Right ventricle myocardium inferior (tissue), 1 donor: ENCODE measurements at regions of chr15 and their contacts with region 1.

Region 1: GRCh38 chr15:31365655-31366127 is 39.1 kb downstream of the KLF13 start:
- DNase-seq: peak; percentile 98
- ATAC-seq: peak; percentile 90

Region 2: DNA sequence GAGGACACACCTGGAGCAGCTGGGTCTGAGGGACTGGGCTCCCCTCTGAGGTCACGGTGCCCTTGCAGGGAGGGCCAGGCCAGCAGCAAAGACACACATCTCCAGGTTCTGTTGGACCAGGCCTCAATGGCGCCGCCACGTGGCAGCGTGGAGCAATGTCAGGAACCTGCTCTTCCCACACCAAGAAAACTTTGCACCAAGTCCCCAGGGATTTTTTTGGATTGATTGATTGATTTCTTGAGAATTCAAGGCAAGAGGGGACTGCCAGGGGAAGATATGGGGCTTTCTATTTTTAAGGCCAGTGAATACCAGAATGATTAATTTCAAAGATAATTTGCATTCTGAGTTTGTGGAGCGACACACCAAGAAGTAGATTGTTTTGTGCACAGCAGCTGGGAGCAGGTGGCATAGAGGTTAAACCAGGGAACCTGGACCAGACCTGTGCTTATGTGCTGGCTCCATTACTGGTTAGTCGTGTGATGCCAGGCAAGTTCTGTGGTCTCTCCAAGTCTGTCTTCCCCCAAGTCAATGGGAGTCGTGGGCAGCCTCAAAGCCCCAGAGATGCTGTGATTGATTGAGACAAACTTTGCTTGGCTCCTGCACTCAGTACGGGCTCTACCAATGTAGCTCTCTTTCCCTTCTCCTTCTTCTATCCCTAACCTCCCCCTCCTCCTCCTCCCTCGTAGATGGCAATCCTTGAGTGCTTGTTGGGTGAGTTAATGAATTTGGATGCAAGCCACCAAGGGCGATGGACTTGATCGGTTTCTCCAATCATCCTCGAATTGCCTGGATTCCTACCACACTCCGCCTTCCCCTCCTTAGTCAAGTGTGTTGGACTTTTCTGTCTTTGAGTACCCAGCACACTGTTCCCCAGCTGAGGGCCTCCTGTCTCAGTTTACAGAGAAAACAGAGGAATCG is 167.9 kb before region 1 on chr15:
- intact Hi-C with region 1: no loop called
- DNase-seq: peak; percentile 81
- ATAC-seq: no peak

Region 3: GRCh38 chr15:31338879-31339557 is 26.7 kb before region 1 on chr15:
- intact Hi-C with region 1: no loop called
- DNase-seq: peak; percentile 88
- ATAC-seq: peak; percentile 65

Region 4: GRCh38 chr15:31352911-31353811 is 12.5 kb before region 1 on chr15:
- intact Hi-C with region 1: loop called (anchors 1 kb)
- DNase-seq: peak; percentile 81
- ATAC-seq: peak; percentile 82

Region 5: GRCh38 chr15:31387479-31388118 is 21.9 kb after region 1 on chr15:
- intact Hi-C with region 1: loop called (anchors 2 kb)
- DNase-seq: peak; percentile 79
- ATAC-seq: peak; percentile 82

Region 6: GRCh38 chr15:31396881-31397560 is 31.3 kb after region 1 on chr15:
- intact Hi-C with region 1: loop called (anchors 2 kb)
- DNase-seq: peak; percentile 97
- ATAC-seq: peak; percentile 92

Region 7: DNA sequence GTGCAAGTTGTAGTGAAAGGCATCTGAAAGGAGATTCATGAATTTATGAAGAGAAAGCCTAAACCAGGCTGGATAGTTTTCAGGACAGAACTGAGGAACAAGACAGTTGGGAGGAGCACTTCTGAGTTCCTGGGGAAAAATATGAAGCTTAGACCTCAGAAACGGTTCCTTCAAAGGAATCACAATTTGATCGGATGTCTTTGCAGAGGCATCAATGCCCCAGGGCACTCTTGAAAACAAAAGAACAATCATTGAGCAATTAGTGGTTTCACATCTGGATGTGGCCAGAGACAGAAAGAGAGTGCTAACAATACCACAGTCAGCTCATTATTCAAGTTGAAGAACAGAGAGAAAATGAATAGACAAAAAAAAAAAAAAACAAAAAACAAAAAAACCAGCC is 47.1 kb after region 1 on chr15:
- intact Hi-C with region 1: no loop called
- DNase-seq: no peak
- ATAC-seq: no peak

Region 8: GRCh38 chr15:31435261-31435911 is 69.7 kb after region 1 on chr15:
- intact Hi-C with region 1: loop called (anchors 2 kb)
- DNase-seq: peak; percentile 87
- ATAC-seq: peak; percentile 86

Region 9: DNA sequence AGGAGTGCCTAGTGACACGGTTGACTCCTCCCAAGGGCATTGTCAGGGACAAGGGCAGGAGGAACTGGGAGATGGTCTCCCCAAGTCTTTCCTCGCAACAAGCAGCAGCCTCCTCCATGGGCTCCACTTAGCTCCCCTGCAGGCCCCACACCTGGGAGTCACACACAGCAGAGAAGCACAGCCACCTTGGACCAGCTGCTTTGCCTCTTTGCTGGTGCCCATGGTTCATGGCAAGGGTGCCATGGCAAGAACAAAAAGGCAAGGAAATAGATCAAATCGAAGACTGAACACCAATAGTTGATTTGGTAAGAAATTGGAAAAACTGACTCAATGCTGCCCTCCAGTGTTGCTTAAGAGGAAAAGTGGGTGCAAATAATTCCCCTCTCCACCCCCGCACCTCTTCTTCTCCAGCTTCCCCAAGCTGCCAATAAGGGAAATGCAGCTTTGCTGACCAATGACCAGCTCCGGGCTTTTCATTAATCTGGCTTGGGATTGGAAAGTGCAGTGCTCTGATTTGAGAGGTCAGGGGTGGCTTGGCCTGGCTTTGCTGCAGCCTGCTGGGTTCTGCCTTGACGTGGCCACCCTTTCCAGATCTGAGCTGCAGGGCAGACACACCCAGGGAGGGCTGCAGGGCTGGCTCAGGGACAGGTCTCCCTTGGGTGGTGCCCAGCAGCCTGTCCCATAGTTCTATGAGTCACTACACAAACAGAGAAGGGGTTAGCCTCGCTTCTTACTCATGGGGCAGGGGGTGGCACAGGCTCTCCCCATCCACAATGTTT is 122.9 kb after region 1 on chr15:
- intact Hi-C with region 1: loop called (anchors 10 kb)
- DNase-seq: peak; percentile 77
- ATAC-seq: peak; percentile 71